ENCODE measurements at regions of chr2 and their contacts with region 1.

Region 1: GRCh38 chr2:231780909-231781797 is at the start of gene PDE6D:
- DNase-seq: peak; percentile 94 to 98 (median 94)
- H3K4me3 ChIP-seq: peak within 1 kb of the TSS; percentile 91 to 96
- H3K4me3 Mint-ChIP-seq: peak within 1 kb of the TSS; percentile 97 to 100 (median 98)
- H3K27ac ChIP-seq: peak within 1 kb of the TSS; percentile 91
- H3K27ac Mint-ChIP-seq: peak within 1 kb of the TSS; percentile 96 to 99 (median 97)
- H3K4me1 ChIP-seq: peaks cover 48% of the 10 kb centered on the region
- H3K4me1 Mint-ChIP-seq: peaks cover 42 to 79% (median 52%) of the 10 kb centered on the region in 4 donors
- H3K27me3 ChIP-seq: no peaks in the 10 kb centered on the region
- H3K27me3 Mint-ChIP-seq: no peaks in the 10 kb centered on the region
- total RNA-seq, gene PDE6D: 29.1 to 30.5 TPM

Region 2: GRCh38 chr2:231612179-231613053 is 168.7 kb before region 1 on chr2:
- CTCF ChIA-PET with region 1: no interaction called
- POLR2A ChIA-PET with region 1: no interaction called
- intact Hi-C with region 1: loop called (anchors 2 kb)
- DNase-seq: peak; percentile 81 to 88 (median 83)
- H3K4me3 ChIP-seq: peak overlapping the region in 1 of 2 donors; percentile 62
- H3K4me3 Mint-ChIP-seq: peak overlapping the region; percentile 71 to 96 (median 87)
- H3K27ac ChIP-seq: peak overlapping the region; percentile 65
- H3K27ac Mint-ChIP-seq: peak overlapping the region; percentile 88 to 96 (median 93)
- H3K4me1 ChIP-seq: peaks cover 23% of the 10 kb centered on the region
- H3K4me1 Mint-ChIP-seq: peaks cover 18 to 41% (median 28%) of the 10 kb centered on the region in 4 donors
- H3K27me3 ChIP-seq: no peaks in the 10 kb centered on the region
- H3K27me3 Mint-ChIP-seq: no peaks in the 10 kb centered on the region

Region 3: GRCh38 chr2:231706731-231707624 is 74.2 kb before region 1 on chr2:
- CTCF ChIA-PET with region 1: no interaction called
- POLR2A ChIA-PET with region 1: interaction called, 7 read pairs
- intact Hi-C with region 1: loop called (anchors 1 kb)
- DNase-seq: peak; percentile 97 to 98 (median 98)
- H3K4me3 ChIP-seq: peak overlapping the region; percentile 90 to 96
- H3K4me3 Mint-ChIP-seq: peak overlapping the region; percentile 95 to 98 (median 97)
- H3K27ac ChIP-seq: peak overlapping the region; percentile 100
- H3K27ac Mint-ChIP-seq: peak overlapping the region; percentile 100
- H3K4me1 ChIP-seq: peaks cover 28% of the 10 kb centered on the region
- H3K4me1 Mint-ChIP-seq: peaks cover 10 to 54% (median 18%) of the 10 kb centered on the region in 4 donors
- H3K27me3 ChIP-seq: no peaks in the 10 kb centered on the region
- H3K27me3 Mint-ChIP-seq: peaks cover 0 to 6% of the 10 kb centered on the region in 2 donors

Region 4: GRCh38 chr2:231861532-231861931 is 80.4 kb after region 1 on chr2:
- CTCF ChIA-PET with region 1: no interaction called
- POLR2A ChIA-PET with region 1: no interaction called
- intact Hi-C with region 1: no loop called
- DNase-seq: no peak
- H3K4me3 ChIP-seq: no peak overlapping the region
- H3K4me3 Mint-ChIP-seq: no peak overlapping the region
- H3K27ac ChIP-seq: no peak overlapping the region
- H3K27ac Mint-ChIP-seq: no peak overlapping the region
- H3K4me1 ChIP-seq: no peaks in the 10 kb centered on the region
- H3K4me1 Mint-ChIP-seq: no peaks in the 10 kb centered on the region
- H3K27me3 ChIP-seq: no peaks in the 10 kb centered on the region
- H3K27me3 Mint-ChIP-seq: peaks cover 3 to 6% of the 10 kb centered on the region in 2 donors

Region 5: DNA sequence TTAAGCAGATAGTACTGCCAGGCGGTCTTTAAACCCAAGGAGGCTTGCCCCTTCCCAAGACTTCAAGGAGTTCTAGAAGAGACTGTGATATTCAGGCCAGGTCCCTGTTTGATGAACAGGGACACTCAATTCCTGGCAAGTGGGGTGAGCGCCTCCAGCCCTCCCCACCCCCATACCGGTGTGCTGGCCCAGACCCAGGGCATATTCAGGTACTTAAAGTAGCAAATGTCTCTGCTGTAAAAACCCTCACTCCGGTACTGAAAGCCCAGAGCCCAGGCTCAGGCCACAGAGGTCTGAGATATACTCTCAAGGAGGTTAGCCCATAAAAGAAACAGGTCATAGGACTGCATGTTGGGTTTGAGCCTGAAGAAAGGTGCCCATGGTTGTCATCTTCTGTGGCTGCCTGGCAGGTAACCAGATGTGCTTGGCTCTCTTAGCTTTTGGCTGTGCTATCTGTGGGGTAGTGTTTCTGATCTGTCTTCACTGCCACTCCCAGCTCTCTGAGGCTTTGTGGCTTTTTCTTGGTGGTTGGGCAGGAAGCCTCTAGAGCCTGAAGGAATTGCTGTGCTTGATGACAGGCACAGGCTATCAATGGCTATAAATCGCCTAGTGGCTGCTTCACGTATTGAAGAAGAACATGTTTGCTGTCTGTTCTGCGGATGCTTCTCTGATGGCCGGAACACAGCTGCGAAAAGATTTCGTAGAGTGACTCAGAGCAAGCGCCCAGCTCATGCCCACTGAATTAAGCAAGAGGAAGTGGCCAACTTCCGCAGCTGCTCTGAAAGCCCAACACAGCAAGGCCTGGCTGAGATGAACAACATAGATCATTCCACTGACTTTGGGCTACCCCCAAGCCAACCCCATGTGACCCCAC is 534.1 kb after region 1 on chr2:
- CTCF ChIA-PET with region 1: no interaction called
- POLR2A ChIA-PET with region 1: no interaction called
- intact Hi-C with region 1: loop called (anchors 10 kb)
- DNase-seq: peak; percentile 81 to 88 (median 83)
- H3K4me3 ChIP-seq: peak overlapping the region; percentile 9 to 43
- H3K4me3 Mint-ChIP-seq: peak overlapping the region; percentile 63 to 82 (median 71)
- H3K27ac ChIP-seq: peak overlapping the region; percentile 32
- H3K27ac Mint-ChIP-seq: peak overlapping the region; percentile 87 to 96 (median 95)
- H3K4me1 ChIP-seq: peaks cover 96% of the 10 kb centered on the region
- H3K4me1 Mint-ChIP-seq: peaks cover 65 to 98% (median 83%) of the 10 kb centered on the region in 4 donors
- H3K27me3 ChIP-seq: no peaks in the 10 kb centered on the region
- H3K27me3 Mint-ChIP-seq: no peaks in the 10 kb centered on the region

Region 6: DNA sequence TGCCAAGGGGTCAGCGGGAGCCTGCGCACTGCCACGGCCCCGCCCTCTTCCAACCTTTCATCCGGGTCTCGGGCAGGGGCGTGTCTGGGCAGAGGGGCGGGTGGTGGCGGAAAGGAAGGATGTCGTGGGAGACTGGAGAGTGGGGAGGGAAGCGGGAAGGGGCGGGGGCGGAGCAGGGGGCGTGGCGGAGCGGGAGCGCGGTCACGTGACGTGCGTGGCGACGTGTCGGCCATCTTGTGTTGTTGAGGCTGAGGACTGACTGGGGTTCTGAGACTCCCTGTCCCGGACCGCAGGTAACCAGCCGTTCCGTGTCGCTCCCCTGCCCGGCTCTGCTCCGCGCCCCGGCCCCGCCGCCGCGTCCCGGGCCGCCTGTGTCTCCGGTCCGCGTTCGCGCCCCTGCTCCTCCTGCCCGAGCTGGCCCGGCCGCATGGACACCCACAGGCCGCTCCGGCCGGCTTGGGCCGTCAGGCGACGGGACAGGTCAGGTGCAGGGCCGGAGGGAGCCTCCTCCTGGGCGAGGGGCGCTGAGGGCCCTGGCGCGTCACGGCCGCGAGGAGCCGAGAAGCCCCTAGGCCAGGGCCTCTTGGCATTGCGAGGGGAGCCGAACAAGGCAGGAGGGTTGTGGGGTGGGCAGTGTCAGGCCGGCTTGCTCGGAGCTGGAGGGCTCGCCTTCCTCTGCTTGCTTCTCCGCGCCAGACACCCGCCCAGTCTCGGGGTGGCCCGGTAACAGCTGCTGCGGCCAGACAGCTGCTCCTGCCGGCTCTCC is 916.1 kb after region 1 on chr2 and contains the start of gene GIGYF2:
- CTCF ChIA-PET with region 1: no interaction called
- POLR2A ChIA-PET with region 1: no interaction called
- intact Hi-C with region 1: loop called (anchors 2 kb)
- DNase-seq: peak; percentile 86 to 91 (median 87)
- H3K4me3 ChIP-seq: peak within 1 kb of the TSS; percentile 55 to 88
- H3K4me3 Mint-ChIP-seq: peak within 1 kb of the TSS; percentile 91 to 96 (median 93)
- H3K27ac ChIP-seq: peak within 1 kb of the TSS; percentile 86
- H3K27ac Mint-ChIP-seq: peak within 1 kb of the TSS; percentile 90 to 95 (median 93)
- H3K4me1 ChIP-seq: peaks cover 40% of the 10 kb centered on the region
- H3K4me1 Mint-ChIP-seq: peaks cover 31 to 52% (median 36%) of the 10 kb centered on the region in 4 donors
- H3K27me3 ChIP-seq: no peaks in the 10 kb centered on the region
- H3K27me3 Mint-ChIP-seq: no peaks in the 10 kb centered on the region
- total RNA-seq, gene GIGYF2: 82.1 to 89.6 TPM